ENCODE measurements at regions of chr9 and their contacts with region 1.

Region 1: GRCh38 chr9:112486221-112487007 is at the start of gene KIAA1958:
- DNase-seq: peak; percentile 50 to 91 (median 81)
- ATAC-seq: peak; percentile 74
- H3K4me3 ChIP-seq: peak within 1 kb of the TSS; percentile 77 to 81
- H3K4me3 Mint-ChIP-seq: peak within 1 kb of the TSS; percentile 97
- H3K27ac ChIP-seq: peak within 1 kb of the TSS; percentile 77 to 78
- H3K27ac Mint-ChIP-seq: peak within 1 kb of the TSS; percentile 94
- H3K4me1 ChIP-seq: peaks cover 12% of the 10 kb centered on the region
- H3K4me1 Mint-ChIP-seq: peaks cover 42% of the 10 kb centered on the region
- H3K27me3 ChIP-seq: no peaks in the 10 kb centered on the region
- H3K27me3 Mint-ChIP-seq: no peaks in the 10 kb centered on the region
- CTCF ChIP-seq: no peak
- total RNA-seq, gene KIAA1958: 7.2 to 7.5 TPM

Region 2: GRCh38 chr9:112341741-112342140 is 144.7 kb before region 1 on chr9:
- CTCF ChIA-PET with region 1: no interaction called
- POLR2A ChIA-PET with region 1: no interaction called
- intact Hi-C with region 1: no loop called
- DNase-seq: no peak
- ATAC-seq: no peak
- H3K4me3 ChIP-seq: no peak overlapping the region
- H3K4me3 Mint-ChIP-seq: no peak overlapping the region
- H3K27ac ChIP-seq: no peak overlapping the region
- H3K27ac Mint-ChIP-seq: no peak overlapping the region
- H3K4me1 ChIP-seq: no peaks in the 10 kb centered on the region
- H3K4me1 Mint-ChIP-seq: no peaks in the 10 kb centered on the region
- H3K27me3 ChIP-seq: peaks cover 0 to 2% of the 10 kb centered on the region in 2 experiments
- H3K27me3 Mint-ChIP-seq: no peaks in the 10 kb centered on the region
- CTCF ChIP-seq: no peak

Region 3: DNA sequence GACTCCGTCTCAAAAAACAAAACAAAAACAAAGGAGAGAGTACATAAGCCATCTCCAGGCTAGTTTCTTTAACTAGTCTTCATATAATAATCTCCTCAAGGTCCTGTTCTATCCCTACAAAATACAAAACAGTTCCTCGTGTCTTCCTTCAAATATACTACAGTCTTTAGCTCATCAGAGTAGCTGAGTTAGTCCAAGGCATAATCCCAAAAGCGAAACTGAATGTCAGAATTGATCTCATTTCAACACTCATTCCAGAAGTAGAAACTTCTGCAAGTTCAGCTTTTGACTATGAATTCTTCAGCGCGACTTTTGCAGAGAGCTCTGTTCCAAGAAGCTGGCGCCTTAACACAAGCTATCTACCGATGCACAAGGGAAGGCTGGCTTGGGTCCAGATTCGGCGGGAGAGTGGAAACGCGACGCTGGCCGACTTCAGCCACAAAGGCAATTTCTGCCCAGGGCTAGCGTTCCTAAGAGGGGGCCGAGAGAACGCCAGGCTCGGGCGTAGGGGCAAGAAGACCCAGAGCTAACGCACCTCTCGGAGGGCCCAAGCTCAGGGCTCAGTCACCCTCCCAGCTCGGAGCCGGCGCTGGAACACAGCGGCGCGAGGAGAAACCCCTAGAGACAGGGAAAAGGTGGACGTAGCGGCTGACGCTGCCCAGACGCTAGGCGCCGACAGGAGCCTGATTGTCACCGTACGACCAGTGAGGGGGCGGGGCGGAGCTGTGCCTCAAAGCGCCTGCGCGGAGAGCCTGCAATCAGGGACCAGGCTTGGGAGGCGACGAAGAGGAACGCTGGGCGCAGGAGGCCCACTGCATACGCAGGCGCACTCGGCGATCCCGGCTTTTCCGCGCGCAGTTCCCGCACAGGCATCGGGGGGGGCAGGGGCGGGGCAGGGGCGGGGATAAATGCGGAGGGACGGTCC is 107.0 kb before region 1 on chr9:
- CTCF ChIA-PET with region 1: no interaction called
- POLR2A ChIA-PET with region 1: interaction called, 18 read pairs
- intact Hi-C with region 1: loop called (anchors 1 kb)
- DNase-seq: peak; percentile 93 to 99 (median 97)
- ATAC-seq: peak; percentile 95
- H3K4me3 ChIP-seq: peak overlapping the region; percentile 81 to 96
- H3K4me3 Mint-ChIP-seq: peak overlapping the region; percentile 99
- H3K27ac ChIP-seq: peak overlapping the region; percentile 77 to 92
- H3K27ac Mint-ChIP-seq: peak overlapping the region; percentile 96
- H3K4me1 ChIP-seq: peaks cover 27% of the 10 kb centered on the region
- H3K4me1 Mint-ChIP-seq: peaks cover 54% of the 10 kb centered on the region
- H3K27me3 ChIP-seq: no peaks in the 10 kb centered on the region
- H3K27me3 Mint-ChIP-seq: no peaks in the 10 kb centered on the region
- CTCF ChIP-seq: no peak

Region 4: GRCh38 chr9:112443200-112443599 is 43.2 kb before region 1 on chr9:
- CTCF ChIA-PET with region 1: interaction called, 3 read pairs
- POLR2A ChIA-PET with region 1: interaction called, 6 read pairs
- intact Hi-C with region 1: loop called in 1 of 2 experiments (anchors 1 kb)
- DNase-seq: peak in 5 of 9 experiments; percentile 7 to 60 (median 40)
- ATAC-seq: peak; percentile 48
- H3K4me3 ChIP-seq: no peak overlapping the region
- H3K4me3 Mint-ChIP-seq: no peak overlapping the region
- H3K27ac ChIP-seq: no peak overlapping the region
- H3K27ac Mint-ChIP-seq: no peak overlapping the region
- H3K4me1 ChIP-seq: no peaks in the 10 kb centered on the region
- H3K4me1 Mint-ChIP-seq: no peaks in the 10 kb centered on the region
- H3K27me3 ChIP-seq: no peaks in the 10 kb centered on the region
- H3K27me3 Mint-ChIP-seq: no peaks in the 10 kb centered on the region
- CTCF ChIP-seq: peak; percentile 55

Region 5: DNA sequence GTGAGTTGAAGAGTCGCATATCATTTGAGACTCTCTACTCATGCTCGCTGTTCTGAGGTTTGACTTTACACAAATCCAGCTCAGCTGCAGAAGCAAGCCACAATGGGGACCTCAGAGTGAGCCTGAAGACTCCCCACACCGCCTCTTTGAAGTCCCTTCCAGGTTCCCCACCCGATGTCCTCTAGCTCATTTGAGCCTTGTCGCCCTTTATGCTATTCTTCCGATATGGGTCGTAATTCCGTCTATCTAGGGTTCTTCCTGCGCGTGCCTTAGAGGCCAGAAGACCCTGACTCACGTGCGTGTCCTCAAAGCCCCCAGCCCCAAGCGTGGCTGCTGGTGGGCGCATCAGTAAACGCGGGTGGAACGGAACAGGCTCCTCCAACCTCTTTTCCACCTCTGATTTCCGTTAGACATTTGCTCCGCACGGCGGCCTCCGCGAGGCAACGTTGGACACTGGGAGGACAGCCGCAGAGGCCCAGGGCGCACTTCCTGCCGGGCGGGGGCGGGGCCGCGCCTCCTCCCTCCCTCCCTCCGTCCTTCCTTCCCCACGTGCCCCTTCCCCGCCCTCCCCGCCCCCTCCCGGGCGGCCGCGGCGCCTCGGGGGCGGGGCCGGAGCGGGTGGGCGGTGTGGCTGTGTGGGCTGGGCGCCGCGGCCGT is 263.8 kb after region 1 on chr9 and contains the start of gene SNX30:
- CTCF ChIA-PET with region 1: no interaction called
- POLR2A ChIA-PET with region 1: interaction called, 12 read pairs
- intact Hi-C with region 1: loop called in 1 of 2 experiments (anchors 1 kb)
- DNase-seq: peak; percentile 42 to 91 (median 78)
- ATAC-seq: peak; percentile 67
- H3K4me3 ChIP-seq: peak within 1 kb of the TSS; percentile 66 to 72
- H3K4me3 Mint-ChIP-seq: peak within 1 kb of the TSS; percentile 91
- H3K27ac ChIP-seq: peak within 1 kb of the TSS; percentile 44 to 83
- H3K27ac Mint-ChIP-seq: peak within 1 kb of the TSS; percentile 94
- H3K4me1 ChIP-seq: peaks cover 47% of the 10 kb centered on the region
- H3K4me1 Mint-ChIP-seq: peaks cover 64% of the 10 kb centered on the region
- H3K27me3 ChIP-seq: no peaks in the 10 kb centered on the region
- H3K27me3 Mint-ChIP-seq: no peaks in the 10 kb centered on the region
- CTCF ChIP-seq: no peak
- total RNA-seq, gene SNX30: 6.0 to 8.1 TPM

Region 6: GRCh38 chr9:113150670-113151611 is 664.5 kb after region 1 on chr9 and contains the start of gene SLC31A2:
- CTCF ChIA-PET with region 1: no interaction called
- POLR2A ChIA-PET with region 1: no interaction called
- intact Hi-C with region 1: loop called in 1 of 2 experiments (anchors 5 kb)
- DNase-seq: peak; percentile 61 to 91 (median 85)
- ATAC-seq: peak; percentile 94
- H3K4me3 ChIP-seq: peak within 1 kb of the TSS; percentile 83 to 88
- H3K4me3 Mint-ChIP-seq: peak within 1 kb of the TSS; percentile 83
- H3K27ac ChIP-seq: peak within 1 kb of the TSS; percentile 38 to 52
- H3K27ac Mint-ChIP-seq: peak within 1 kb of the TSS; percentile 41
- H3K4me1 ChIP-seq: peaks cover 20% of the 10 kb centered on the region
- H3K4me1 Mint-ChIP-seq: peaks cover 35% of the 10 kb centered on the region
- H3K27me3 ChIP-seq: no peaks in the 10 kb centered on the region
- H3K27me3 Mint-ChIP-seq: no peaks in the 10 kb centered on the region
- CTCF ChIP-seq: peak; percentile 33
- total RNA-seq, gene SLC31A2: 5.4 to 6.0 TPM

Measured in CD8-positive, alpha-beta T cell (primary cell).